ENCODE measurements at regions of chr3 and their contacts with region 1.

Region 1: DNA sequence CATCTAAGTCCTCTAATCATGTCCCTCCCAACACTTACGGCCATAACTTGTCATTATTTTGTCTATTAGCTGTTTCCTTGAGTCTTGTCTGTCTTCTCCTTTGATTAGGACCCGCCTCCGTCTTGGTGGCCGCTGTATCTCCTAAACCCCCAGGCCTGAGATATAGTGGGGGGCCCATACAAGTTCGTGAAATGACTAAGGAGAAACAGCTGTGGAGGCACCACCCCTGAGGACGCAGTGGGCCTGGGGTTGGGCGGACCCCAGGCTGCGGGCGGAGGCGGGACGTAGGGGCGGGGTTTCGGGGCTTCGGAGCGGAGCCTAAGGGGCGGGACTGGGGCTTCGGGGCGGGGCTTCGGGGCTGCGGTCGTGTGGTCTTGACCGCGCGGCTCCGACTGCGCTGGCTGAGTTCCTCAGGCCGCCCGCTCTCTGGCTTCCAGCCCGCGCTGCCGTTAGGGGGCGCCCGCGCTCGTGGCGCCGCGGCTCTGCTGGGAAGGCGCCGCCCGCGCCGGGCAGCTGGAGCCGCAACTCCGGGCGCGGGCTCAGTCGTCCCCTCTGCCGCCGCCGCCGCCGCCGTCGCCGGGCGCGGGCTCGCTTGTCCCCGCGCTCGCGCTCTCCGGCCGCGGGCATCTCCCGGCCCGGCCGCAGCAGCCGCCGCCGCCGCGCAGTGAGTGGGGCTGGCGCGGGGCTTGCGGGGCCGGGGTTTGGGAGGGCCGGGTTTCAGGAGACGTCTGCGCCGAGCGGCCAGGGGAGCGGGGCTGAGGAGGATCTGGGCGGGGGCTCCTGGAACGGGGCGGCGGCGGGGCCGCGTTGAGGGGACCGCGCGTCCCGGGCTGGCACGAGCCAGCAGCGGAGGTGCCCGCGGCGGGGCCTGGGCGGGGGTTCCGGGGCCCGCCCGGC is at the start of gene KCTD6:
- DNase-seq: peak; percentile 97
- H3K4me3 ChIP-seq: peak within 1 kb of the TSS; percentile 84
- H3K27ac ChIP-seq: peak within 1 kb of the TSS; percentile 21 to 85; a peak in 3 of 4 replicates
- H3K4me1 ChIP-seq: peaks cover 24 to 27% of the 10 kb centered on the region in 2 experiments
- H3K27me3 ChIP-seq: no peaks in the 10 kb centered on the region
- CTCF ChIP-seq: peak; percentile 57
- EP300 ChIP-seq: no peak; a peak in 1 of 4 replicates
- RAD21 ChIP-seq: peak; percentile 64
- polyA plus RNA-seq, gene KCTD6: 7.8 and 10.1 TPM in 2 replicates

Region 2: GRCh38 chr3:58422756-58423325 is 68.9 kb before region 1 on chr3:
- CTCF ChIA-PET with region 1: no interaction called
- POLR2A ChIA-PET with region 1: no interaction called
- DNase-seq: no peak
- H3K4me3 ChIP-seq: no peak overlapping the region
- H3K27ac ChIP-seq: no peak overlapping the region
- H3K4me1 ChIP-seq: 0 out of 4 replicates have a peak, but pooled peaks cover 0 to 3% of the 10 kb centered on the region in 2 experiments
- H3K27me3 ChIP-seq: no peaks in the 10 kb centered on the region
- CTCF ChIP-seq: no peak
- EP300 ChIP-seq: no peak
- RAD21 ChIP-seq: 0 out of 2 replicates have a peak, but pooled peaks have one; percentile 6

Region 3: DNA sequence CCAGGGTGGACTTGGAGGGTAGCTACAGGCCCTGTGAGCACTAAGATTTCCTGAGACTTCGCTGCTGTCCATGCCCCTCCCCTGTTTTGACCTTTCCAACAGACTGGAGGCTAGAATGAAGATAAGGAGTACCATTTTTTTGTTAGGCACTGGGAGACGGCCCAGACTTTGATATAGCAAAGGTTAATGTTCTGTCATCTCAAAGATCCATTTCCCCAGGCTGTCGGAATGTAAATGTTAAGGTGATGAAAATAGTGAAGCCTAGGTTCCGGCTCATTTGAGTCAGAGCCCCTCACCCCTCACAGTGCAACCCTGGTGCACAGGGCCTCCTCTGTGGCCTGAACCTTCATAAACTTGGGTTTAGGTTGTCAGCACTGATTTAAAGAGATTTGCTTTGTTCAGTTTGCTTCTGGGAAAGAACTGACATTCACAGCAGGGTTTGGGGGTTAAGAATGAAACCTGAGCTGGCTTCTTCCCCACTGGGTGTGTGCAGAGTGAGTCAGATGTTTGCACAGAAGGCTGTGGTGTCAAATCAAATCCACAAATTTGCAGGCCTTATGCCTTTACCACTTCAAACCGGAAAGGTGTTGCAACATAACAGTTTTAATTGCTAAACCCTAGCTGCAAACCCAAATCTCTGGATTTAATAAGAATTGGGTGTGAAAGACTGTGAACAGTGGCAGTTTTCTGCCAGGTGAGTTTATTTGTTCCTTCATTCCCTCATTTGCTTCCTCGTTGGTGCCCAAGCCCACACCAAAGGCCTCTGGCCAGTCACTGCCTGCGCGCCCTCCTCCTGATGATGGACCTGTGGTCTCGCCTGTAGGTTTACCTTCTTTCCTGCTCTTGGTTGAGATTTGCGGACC is 20.5 kb before region 1 on chr3:
- CTCF ChIA-PET with region 1: interaction called, 12 read pairs
- POLR2A ChIA-PET with region 1: interaction called, 3 read pairs
- DNase-seq: no peak
- H3K4me3 ChIP-seq: no peak overlapping the region
- H3K27ac ChIP-seq: peak overlapping the region; percentile 42 to 47; a peak in 3 of 4 replicates
- H3K4me1 ChIP-seq: peaks cover 5 to 11% of the 10 kb centered on the region in 2 experiments; a peak in 3 of 4 replicates
- H3K27me3 ChIP-seq: no peaks in the 10 kb centered on the region
- CTCF ChIP-seq: no peak
- EP300 ChIP-seq: peak; percentile 22 to 29; a peak in 1 of 4 replicates
- RAD21 ChIP-seq: no peak

Region 4: DNA sequence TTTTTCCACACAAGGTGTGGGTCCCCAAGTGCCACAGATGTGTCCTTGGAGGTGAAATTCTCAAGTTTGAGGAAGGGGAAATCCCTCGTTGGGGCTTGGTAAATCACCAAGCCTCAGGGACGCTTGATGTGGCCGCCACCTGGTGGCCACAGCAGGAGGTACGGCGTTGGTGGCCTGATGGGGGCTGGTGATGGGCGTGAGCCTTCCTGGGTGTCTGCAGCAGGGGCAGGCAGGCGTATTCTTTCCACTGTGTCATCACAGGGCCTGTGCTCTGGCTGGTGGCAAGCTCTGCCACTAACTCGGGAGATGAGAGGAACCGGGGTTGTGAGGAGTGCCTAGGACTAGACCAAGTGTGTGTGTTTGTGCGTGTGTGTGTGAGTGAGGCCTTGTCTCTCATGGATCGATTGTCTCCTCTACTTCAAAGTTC is 41.1 kb after region 1 on chr3:
- CTCF ChIA-PET with region 1: interaction called, 99 read pairs
- POLR2A ChIA-PET with region 1: interaction called, 4 read pairs
- DNase-seq: peak; percentile 89
- H3K4me3 ChIP-seq: peak overlapping the region in 1 of 2 experiments; percentile 17; a peak in 1 of 4 replicates
- H3K27ac ChIP-seq: no peak overlapping the region
- H3K4me1 ChIP-seq: peaks cover 12 to 32% of the 10 kb centered on the region in 2 experiments
- H3K27me3 ChIP-seq: no peaks in the 10 kb centered on the region
- CTCF ChIP-seq: peak; percentile 90
- EP300 ChIP-seq: no peak
- RAD21 ChIP-seq: peak; percentile 92

Measured in SK-N-SH (cell line).